A673 (cell line): ENCODE measurements at regions of chr20 and their contacts with region 1.

Region 1: GRCh38 chr20:4702562-4703280 is 19.0 kb upstream of the PRND start:
- DNase-seq: peak; percentile 32
- H3K4me3 ChIP-seq: no peak overlapping the region
- H3K27ac ChIP-seq: no peak overlapping the region
- H3K4me1 ChIP-seq: peaks cover 9% of the 10 kb centered on the region
- H3K27me3 ChIP-seq: no peaks in the 10 kb centered on the region
- CTCF ChIP-seq: no peak

Region 2: GRCh38 chr20:4227085-4227821 is 475.5 kb before region 1 on chr20:
- CTCF ChIA-PET with region 1: interaction called, 10 read pairs
- POLR2A ChIA-PET with region 1: no interaction called
- intact Hi-C with region 1: no loop called
- DNase-seq: peak; percentile 74
- H3K4me3 ChIP-seq: no peak overlapping the region
- H3K27ac ChIP-seq: peak overlapping the region; percentile 81
- H3K4me1 ChIP-seq: peaks cover 72% of the 10 kb centered on the region
- H3K27me3 ChIP-seq: no peaks in the 10 kb centered on the region
- CTCF ChIP-seq: peak; percentile 61